Activated CD8-positive, alpha-beta T cell treated with anti-CD3 and anti-CD28 coated beads for 36 hours (primary cell): ENCODE measurements at regions of chr12 and their contacts with region 1.

Region 1: GRCh38 chr12:76559400-76560085 is at the start of gene OSBPL8:
- DNase-seq: peak; percentile 97
- ATAC-seq: peak; percentile 78
- H3K4me3 Mint-ChIP-seq: peak within 1 kb of the TSS; percentile 91
- H3K27ac Mint-ChIP-seq: peak within 1 kb of the TSS; percentile 97
- H3K4me1 Mint-ChIP-seq: peaks cover 34% of the 10 kb centered on the region
- H3K27me3 Mint-ChIP-seq: no peaks in the 10 kb centered on the region
- CTCF ChIP-seq: no peak
- total RNA-seq, gene OSBPL8: 81.1 to 85.6 TPM

Region 2: DNA sequence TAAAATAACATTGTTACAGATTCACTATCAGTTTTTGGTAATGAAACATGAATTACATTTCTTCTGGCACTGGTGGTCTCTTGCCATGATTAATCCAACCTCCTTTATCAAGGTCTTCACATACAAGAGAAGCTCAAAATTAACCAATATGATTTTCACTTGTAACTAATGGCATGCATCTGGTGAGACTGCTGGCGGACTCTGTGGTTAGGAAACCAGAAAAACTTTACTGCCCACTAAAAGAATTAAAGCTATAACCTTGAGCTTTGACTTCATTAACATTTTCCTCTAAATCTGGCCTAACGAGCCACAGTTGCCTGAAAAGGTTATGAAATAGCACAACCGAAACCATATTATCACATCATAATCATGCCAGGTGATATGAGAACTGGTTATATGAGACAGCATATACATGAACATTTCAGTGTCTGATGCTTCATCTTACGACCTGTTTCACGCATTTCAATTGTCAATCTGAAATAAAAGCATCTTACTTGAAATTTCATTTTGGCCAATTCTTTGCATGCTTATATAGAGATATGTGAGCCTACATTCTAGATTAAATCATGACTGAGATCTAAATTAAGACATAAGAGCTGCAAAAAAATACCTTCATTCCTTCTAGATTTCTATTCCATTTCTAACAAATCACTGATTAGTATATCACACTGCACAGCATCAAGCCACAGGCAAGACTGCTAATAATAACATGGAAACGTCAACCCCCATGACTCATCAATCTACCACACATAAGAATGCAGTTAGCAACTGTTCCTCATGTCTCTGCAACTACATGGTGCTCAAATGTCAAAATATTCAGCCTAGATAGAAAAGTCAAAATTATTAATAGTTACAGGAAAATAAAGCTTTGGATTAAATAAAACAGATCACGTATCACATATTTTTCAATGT is 89.3 kb before region 1 on chr12:
- CTCF ChIA-PET with region 1: no interaction called
- POLR2A ChIA-PET with region 1: interaction called, 3 read pairs
- intact Hi-C with region 1: loop called (anchors 10 kb)
- DNase-seq: peak; percentile 20
- ATAC-seq: peak; percentile 82
- H3K4me3 Mint-ChIP-seq: no peak overlapping the region
- H3K27ac Mint-ChIP-seq: no peak overlapping the region
- H3K4me1 Mint-ChIP-seq: peaks cover 11% of the 10 kb centered on the region
- H3K27me3 Mint-ChIP-seq: no peaks in the 10 kb centered on the region
- CTCF ChIP-seq: no peak

Region 3: GRCh38 chr12:76548222-76548837 is 11.2 kb before region 1 on chr12:
- CTCF ChIA-PET with region 1: interaction called, 3 read pairs
- POLR2A ChIA-PET with region 1: interaction called, 29 read pairs
- intact Hi-C with region 1: no loop called
- DNase-seq: no peak
- ATAC-seq: no peak
- H3K4me3 Mint-ChIP-seq: no peak overlapping the region
- H3K27ac Mint-ChIP-seq: no peak overlapping the region
- H3K4me1 Mint-ChIP-seq: peaks cover 81% of the 10 kb centered on the region
- H3K27me3 Mint-ChIP-seq: no peaks in the 10 kb centered on the region
- CTCF ChIP-seq: no peak